ENCODE measurements at regions of chr22 and their contacts with region 1.

Region 1: GRCh38 chr22:29245637-29246385 is 22.0 kb downstream of the RHBDD3 start:
- DNase-seq: peak in 1 of 2 donors; percentile 95
- H3K4me3 ChIP-seq: no peak overlapping the region
- H3K27ac ChIP-seq: no peak overlapping the region
- H3K4me1 ChIP-seq: no peaks in the 10 kb centered on the region
- H3K27me3 ChIP-seq: no peaks in the 10 kb centered on the region
- CTCF ChIP-seq: peak; percentile 60 to 89 (median 83)
- POLR2A ChIP-seq: no peak

Region 2: GRCh38 chr22:28864878-28865596 is 380.8 kb before region 1 on chr22:
- intact Hi-C with region 1: loop called (anchors 10 kb)
- DNase-seq: no peak
- H3K4me3 ChIP-seq: no peak overlapping the region
- H3K27ac ChIP-seq: no peak overlapping the region
- H3K4me1 ChIP-seq: no peaks in the 10 kb centered on the region
- H3K27me3 ChIP-seq: no peaks in the 10 kb centered on the region
- CTCF ChIP-seq: no peak
- POLR2A ChIP-seq: no peak

Region 3: GRCh38 chr22:29205594-29206371 is 40.0 kb before region 1 on chr22 and contains the start of gene EMID1:
- intact Hi-C with region 1: loop called (anchors 2 kb)
- DNase-seq: no peak
- H3K4me3 ChIP-seq: peak within 1 kb of the TSS; percentile 53 to 64
- H3K27ac ChIP-seq: peak within 1 kb of the TSS; percentile 45
- H3K4me1 ChIP-seq: peaks cover 14% of the 10 kb centered on the region
- H3K27me3 ChIP-seq: no peaks in the 10 kb centered on the region
- CTCF ChIP-seq: no peak
- POLR2A ChIP-seq: no peak
- total RNA-seq, gene EMID1: 2.5 TPM